HEK293T (cell line): ENCODE measurements at regions of chr4 and their contacts with region 1.

Region 1: DNA sequence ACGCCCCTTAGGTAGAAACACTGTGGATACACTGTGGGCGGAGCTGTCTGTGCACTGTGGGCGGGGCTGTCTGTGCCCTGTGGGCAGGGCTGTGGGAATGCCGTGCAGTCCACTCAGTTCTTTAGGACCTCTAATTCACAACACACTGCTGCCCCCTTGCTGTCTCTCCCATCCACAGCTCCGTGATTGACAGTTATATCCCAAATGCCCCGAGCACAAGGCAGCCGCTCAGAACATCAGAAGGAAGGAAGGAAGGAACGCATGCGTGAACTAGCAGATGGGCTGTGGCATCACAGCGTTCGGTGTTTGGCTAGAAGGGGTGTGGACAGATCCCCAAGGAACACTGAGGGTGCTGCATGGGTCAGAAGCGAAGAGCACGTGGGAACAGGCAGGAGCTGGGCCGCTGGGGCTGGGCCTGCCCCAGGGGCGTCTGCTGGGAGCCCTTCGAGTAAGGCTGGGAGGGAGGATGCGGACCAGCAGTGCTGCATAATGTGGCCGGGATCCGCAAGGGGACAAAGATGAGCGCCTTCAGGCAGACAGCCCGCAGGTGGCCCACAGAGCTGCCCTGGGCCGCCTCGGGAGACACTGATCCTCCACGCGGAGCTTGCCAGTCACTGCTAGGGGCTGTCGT is 29.8 kb downstream of the ACOX3 start:
- DNase-seq: peak; percentile 90

Region 2: DNA sequence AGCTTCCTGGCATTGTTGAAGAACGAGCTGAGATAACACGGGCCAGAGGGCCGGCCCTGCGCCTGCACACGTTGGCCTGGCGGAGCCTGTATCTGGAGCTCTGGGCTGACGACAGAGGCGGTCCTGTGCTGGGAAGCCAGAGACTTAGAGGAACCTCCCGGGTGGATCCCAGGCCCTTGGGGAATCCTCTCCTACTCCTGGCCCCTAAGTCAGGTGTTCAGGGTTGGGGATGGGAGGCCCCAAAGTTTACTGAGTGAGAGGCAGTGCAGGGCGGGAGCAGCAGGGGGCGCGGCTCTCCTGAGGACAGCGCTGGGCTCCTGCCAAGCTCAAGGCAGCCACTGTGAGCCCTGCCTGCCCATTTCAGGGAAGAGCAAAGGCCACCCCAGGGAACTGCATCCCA is 143.7 kb before region 1 on chr4:
- CTCF ChIA-PET with region 1: interaction called, 11 read pairs
- POLR2A ChIA-PET with region 1: no interaction called
- DNase-seq: peak; percentile 73

Region 3: GRCh38 chr4:8451440-8452197 is 40.9 kb after region 1 on chr4:
- CTCF ChIA-PET with region 1: no interaction called
- POLR2A ChIA-PET with region 1: no interaction called
- DNase-seq: no peak